ENCODE measurements at regions of chr11 and their contacts with region 1.

Region 1: GRCh38 chr11:5808500-5809121 is at the start of gene OR52N2:
- DNase-seq: peak; percentile 53 to 80 (median 73)
- ATAC-seq: peak; percentile 100
- H3K4me3 ChIP-seq: peak within 1 kb of the TSS; percentile 35 to 51
- H3K27ac ChIP-seq: no peak within 1 kb of the TSS
- H3K4me1 ChIP-seq: peaks cover 0 to 13% of the 10 kb centered on the region in 2 donors
- H3K27me3 ChIP-seq: no peaks in the 10 kb centered on the region
- CTCF ChIP-seq: peak; percentile 85 to 91
- polyA plus RNA-seq, gene OR52N2: 0.16 to 0.18 TPM in 2 of 6 donors, not detected in the others

Region 2: GRCh38 chr11:5476184-5476819 is 332.3 kb before region 1 on chr11:
- intact Hi-C with region 1: loop called in 1 of 2 experiments (anchors 5 kb)
- DNase-seq: peak in 2 of 4 donors; percentile 7 to 46
- ATAC-seq: peak; percentile 90
- H3K4me3 ChIP-seq: no peak overlapping the region
- H3K27ac ChIP-seq: no peak overlapping the region
- H3K4me1 ChIP-seq: no peaks in the 10 kb centered on the region
- H3K27me3 ChIP-seq: no peaks in the 10 kb centered on the region
- CTCF ChIP-seq: peak; percentile 73 to 81

Region 3: DNA sequence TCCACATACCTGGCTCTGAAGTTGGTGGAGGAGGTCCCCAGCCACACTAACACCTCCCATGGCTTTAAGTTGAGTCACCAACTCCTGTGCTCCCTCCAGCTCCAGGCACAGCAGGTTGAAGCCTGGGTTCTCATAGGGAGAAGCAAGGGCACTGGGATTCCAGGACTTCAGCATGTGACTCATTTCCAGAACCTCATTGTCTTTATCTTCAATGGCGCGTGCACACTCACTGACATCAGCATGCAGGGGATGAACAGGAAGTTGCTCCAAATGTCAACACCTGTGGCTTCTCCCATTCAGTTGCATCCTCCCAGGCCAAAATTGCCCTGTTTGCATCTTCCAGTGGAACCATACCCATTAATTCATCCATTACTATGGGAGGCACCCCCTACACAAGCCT is 286.3 kb before region 1 on chr11:
- intact Hi-C with region 1: no loop called
- DNase-seq: no peak
- ATAC-seq: no peak
- H3K4me3 ChIP-seq: no peak overlapping the region
- H3K27ac ChIP-seq: no peak overlapping the region
- H3K4me1 ChIP-seq: no peaks in the 10 kb centered on the region
- H3K27me3 ChIP-seq: no peaks in the 10 kb centered on the region
- CTCF ChIP-seq: no peak

Region 4: DNA sequence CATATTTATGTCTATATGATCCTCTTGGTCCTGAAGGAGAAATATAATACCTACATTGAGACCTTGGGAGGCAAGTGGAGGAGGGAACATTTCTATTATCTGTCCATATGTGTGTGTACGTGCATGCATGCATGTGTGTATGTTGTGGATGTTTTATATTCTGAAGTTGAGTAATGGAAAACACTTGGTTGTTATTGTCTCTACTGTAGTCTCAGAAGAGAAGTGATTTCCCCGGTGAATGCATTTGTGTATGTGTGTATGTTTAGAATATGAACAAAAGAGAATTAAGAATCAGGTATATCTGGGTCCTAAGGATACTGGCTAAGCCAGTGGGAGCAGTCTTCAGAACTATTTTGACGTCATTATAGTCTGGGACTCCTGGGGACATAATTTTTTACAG is 17.4 kb before region 1 on chr11 and contains the start of gene OR52N1:
- intact Hi-C with region 1: no loop called
- DNase-seq: no peak
- ATAC-seq: no peak
- H3K4me3 ChIP-seq: no peak within 1 kb of the TSS
- H3K27ac ChIP-seq: no peak within 1 kb of the TSS
- H3K4me1 ChIP-seq: no peaks in the 10 kb centered on the region
- H3K27me3 ChIP-seq: peaks cover 0 to 4% of the 10 kb centered on the region in 2 donors
- CTCF ChIP-seq: no peak
- polyA plus RNA-seq, gene OR52N1: not detected